Ovary (tissue), 10 donors: ENCODE measurements at regions of chr14 and their contacts with region 1.

Region 1: GRCh38 chr14:101559624-101560533 is 1.4 kb upstream of the DIO3 start:
- DNase-seq: peak; percentile 72 to 85 (median 79)
- H3K4me3 ChIP-seq: peak overlapping the region; percentile 75
- H3K27ac ChIP-seq: peak overlapping the region; percentile 94 to 96
- H3K4me1 ChIP-seq: peaks cover 13% of the 10 kb centered on the region
- H3K27me3 ChIP-seq: no peaks in the 10 kb centered on the region
- CTCF ChIP-seq: peak; percentile 19 to 61 (median 49)
- EP300 ChIP-seq: no peak
- POLR2A ChIP-seq: peak; percentile 10

Region 2: GRCh38 chr14:100900837-100901390 is 659.0 kb before region 1 on chr14:
- intact Hi-C with region 1: loop called in 1 of 4 experiments (anchors 10 kb)
- DNase-seq: peak in 3 of 5 donors; percentile 52 to 74 (median 53)
- H3K4me3 ChIP-seq: no peak overlapping the region
- H3K27ac ChIP-seq: no peak overlapping the region
- H3K4me1 ChIP-seq: peaks cover 4% of the 10 kb centered on the region
- H3K27me3 ChIP-seq: no peaks in the 10 kb centered on the region
- CTCF ChIP-seq: peak in 1 of 3 donors; percentile 28
- EP300 ChIP-seq: no peak
- POLR2A ChIP-seq: no peak

Region 3: GRCh38 chr14:101183376-101184103 is 376.3 kb before region 1 on chr14:
- intact Hi-C with region 1: loop called in 3 of 4 experiments (anchors 2 to 10 kb)
- DNase-seq: peak; percentile 57 to 79 (median 70)
- H3K4me3 ChIP-seq: no peak overlapping the region
- H3K27ac ChIP-seq: no peak overlapping the region
- H3K4me1 ChIP-seq: no peaks in the 10 kb centered on the region
- H3K27me3 ChIP-seq: no peaks in the 10 kb centered on the region
- CTCF ChIP-seq: peak in 2 of 3 donors; percentile 62 to 70
- EP300 ChIP-seq: no peak
- POLR2A ChIP-seq: no peak

Region 4: DNA sequence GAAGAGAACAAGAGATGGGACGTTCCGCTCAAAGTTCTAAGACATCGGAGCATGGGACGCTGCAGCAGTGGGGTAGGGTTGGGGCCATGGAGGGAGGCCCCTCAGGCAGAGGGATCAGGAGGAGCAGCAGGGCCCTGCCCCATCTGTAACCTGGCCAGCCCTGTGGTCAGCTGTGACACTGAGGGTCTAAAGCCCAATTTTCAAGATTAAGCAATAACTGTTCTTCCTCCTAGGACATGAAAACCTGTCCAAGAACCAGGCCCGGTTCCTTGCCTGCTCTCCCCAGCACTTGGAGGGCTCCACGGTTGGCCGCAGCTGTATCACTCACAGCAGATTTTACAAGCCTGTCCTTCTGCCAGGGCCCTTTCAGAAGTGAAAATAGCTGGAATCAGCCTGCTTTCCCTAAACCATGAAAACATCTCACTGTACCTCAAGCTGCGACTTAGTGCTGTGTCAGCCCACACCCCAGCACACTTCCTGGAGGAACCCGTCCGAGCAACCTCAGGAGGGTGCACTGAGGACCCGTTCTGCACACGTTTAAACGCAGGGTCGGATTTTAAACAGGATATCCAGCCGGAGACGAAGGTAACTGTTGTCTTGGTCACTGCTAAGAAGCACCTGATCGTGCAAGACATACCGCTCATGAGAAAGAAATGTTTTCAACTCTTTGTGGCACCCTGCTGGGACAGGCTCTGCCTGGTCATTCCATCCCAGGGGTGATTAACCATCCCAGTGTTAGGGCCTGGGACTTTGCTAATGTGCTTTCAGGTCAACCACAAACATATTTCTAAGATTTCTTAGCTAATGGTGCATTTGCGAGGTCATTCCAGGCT is 200.4 kb before region 1 on chr14:
- intact Hi-C with region 1: loop called in 3 of 4 experiments (anchors 2 to 10 kb)
- DNase-seq: peak; percentile 66 to 77 (median 71)
- H3K4me3 ChIP-seq: no peak overlapping the region
- H3K27ac ChIP-seq: peak overlapping the region; percentile 9 to 94
- H3K4me1 ChIP-seq: peaks cover 48% of the 10 kb centered on the region
- H3K27me3 ChIP-seq: no peaks in the 10 kb centered on the region
- CTCF ChIP-seq: no peak
- EP300 ChIP-seq: no peak
- POLR2A ChIP-seq: no peak

Region 5: DNA sequence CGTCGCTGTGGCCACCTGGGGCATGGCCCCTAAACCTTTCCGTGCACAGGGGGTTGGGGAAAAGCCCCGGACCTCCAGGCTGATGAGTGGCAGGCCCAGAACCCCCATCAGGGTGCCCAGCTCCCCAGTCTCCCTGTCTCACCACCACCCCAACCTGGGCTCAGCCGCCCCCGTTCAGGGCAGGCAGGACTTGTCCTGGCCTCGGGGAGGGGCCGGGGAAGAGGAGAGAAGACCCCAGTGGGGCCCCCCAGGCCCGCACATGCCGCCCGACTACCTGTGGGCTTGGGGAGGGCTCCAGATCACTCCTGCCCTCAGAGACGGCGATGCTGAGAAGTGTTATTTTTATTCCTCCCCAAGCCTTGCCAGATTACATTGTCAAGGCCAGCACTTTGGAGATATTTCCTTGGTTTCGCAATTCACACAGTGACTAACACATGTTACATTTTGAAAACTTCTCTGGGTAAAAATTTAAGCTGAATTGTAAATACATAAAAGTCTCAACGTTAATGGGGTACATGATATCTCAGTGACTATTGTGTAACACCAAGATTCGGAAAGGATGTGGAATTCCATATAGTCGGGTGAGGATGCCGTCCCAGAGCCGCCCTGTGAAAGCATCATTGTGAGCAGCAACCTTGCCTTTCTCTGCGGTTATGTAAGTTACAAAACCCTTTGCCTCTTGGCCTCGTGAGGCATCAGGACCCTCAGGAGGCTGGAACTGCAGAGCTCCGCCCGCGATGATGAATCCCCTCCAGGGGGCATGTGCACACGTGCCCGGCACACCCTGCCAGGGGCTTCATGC is 84.2 kb before region 1 on chr14:
- intact Hi-C with region 1: loop called in 2 of 4 experiments (anchors 5 kb)
- DNase-seq: peak; percentile 72 to 82 (median 75)
- H3K4me3 ChIP-seq: peak overlapping the region; percentile 29
- H3K27ac ChIP-seq: peak overlapping the region; percentile 45 to 97
- H3K4me1 ChIP-seq: peaks cover 20% of the 10 kb centered on the region
- H3K27me3 ChIP-seq: no peaks in the 10 kb centered on the region
- CTCF ChIP-seq: no peak
- EP300 ChIP-seq: no peak
- POLR2A ChIP-seq: peak; percentile 48

Region 6: GRCh38 chr14:101520621-101521472 is 39.0 kb before region 1 on chr14:
- intact Hi-C with region 1: no loop called
- DNase-seq: peak; percentile 58 to 86 (median 78)
- H3K4me3 ChIP-seq: no peak overlapping the region
- H3K27ac ChIP-seq: peak overlapping the region; percentile 25 to 30
- H3K4me1 ChIP-seq: peaks cover 13% of the 10 kb centered on the region
- H3K27me3 ChIP-seq: no peaks in the 10 kb centered on the region
- CTCF ChIP-seq: no peak
- EP300 ChIP-seq: no peak
- POLR2A ChIP-seq: no peak

Region 7: DNA sequence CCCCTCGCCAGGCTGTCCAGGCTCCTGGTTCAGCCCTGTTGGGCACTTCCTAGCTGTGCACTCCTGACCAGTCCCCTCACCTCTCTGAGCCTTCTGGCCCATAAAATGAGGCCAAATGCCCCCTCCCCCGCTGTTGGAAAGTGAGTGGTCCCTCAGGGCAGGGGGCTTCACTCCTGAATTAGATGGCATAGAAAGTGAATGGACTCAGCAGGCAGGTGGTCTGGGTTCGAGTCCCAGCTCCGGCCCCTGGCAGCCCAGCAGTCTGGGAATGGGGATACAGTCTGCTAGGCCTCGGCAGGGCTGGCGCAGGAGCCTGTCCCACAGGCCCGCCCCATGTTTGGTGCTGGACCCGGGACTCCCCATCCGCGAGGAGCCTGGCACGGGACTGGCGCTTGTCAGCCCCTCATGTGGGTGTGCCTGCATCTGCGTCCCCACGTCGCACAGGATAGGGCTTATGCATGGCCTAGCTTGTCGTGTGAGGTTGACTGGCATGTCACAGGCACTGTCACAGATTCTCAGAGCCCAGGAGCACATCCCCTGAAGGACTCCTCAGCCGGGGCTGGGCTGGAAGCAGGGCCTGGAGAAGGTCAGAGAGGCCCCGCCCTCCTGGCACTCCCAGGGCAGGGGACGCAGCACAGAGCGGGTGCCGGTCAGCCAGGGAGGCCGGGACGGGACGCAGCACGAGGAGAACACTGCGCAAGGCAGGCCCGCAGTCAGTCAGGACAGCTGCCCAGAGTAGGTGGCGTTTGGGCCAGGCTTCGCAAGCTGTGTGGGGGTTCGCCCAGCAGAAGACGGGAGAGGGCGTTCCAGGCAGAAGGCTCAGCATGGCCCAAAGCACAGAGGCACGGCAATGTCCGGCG is 42.0 kb after region 1 on chr14:
- intact Hi-C with region 1: no loop called
- DNase-seq: peak in 4 of 5 donors; percentile 7 to 12 (median 9)
- H3K4me3 ChIP-seq: no peak overlapping the region
- H3K27ac ChIP-seq: no peak overlapping the region
- H3K4me1 ChIP-seq: no peaks in the 10 kb centered on the region
- H3K27me3 ChIP-seq: no peaks in the 10 kb centered on the region
- CTCF ChIP-seq: no peak
- EP300 ChIP-seq: no peak
- POLR2A ChIP-seq: no peak